ENCODE measurements at regions of chr19 and their contacts with region 1.

Region 1: DNA sequence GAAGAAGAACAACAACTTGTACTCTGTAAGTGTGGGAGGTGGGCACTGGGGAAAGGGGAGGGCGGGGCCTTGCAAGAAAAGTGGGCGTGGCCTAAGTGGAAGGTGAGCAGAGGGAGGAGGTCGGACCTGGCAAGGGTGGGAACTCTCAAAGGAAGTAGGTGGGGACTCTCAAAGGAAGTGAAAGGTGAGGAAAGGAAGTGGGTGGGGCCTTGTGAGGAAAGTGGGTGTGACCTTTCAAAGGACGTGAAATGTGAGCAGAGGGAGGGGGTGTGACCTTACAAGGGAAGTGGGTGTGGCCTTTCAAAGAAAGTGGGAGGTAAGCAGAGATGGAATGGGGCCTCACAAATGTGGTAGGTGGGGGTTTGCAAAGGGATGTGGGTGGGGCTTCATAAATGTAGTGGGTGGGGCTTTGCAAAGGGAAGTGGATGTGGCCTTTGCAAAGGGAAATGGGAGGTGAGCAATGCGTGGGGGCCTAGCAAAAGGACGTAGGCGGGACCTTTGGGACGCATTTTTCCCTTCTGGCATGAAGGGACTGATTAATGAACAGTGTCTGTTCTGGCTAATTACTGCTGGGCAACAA is 25.9 kb downstream of the ACSBG2 start:
- DNase-seq: peak; percentile 7
- H3K4me3 ChIP-seq: no peak overlapping the region
- H3K27ac ChIP-seq: no peak overlapping the region
- H3K4me1 ChIP-seq: no peaks in the 10 kb centered on the region
- H3K27me3 ChIP-seq: no peaks in the 10 kb centered on the region
- CTCF ChIP-seq: no peak
- POLR2A ChIP-seq: no peak

Region 2: GRCh38 chr19:6171566-6171965 is 10.2 kb after region 1 on chr19:
- CTCF ChIA-PET with region 1: no interaction called
- POLR2A ChIA-PET with region 1: no interaction called
- dilution Hi-C with region 1: no loop called
- intact Hi-C with region 1: no loop called
- DNase-seq: no peak
- H3K4me3 ChIP-seq: no peak overlapping the region
- H3K27ac ChIP-seq: no peak overlapping the region
- H3K4me1 ChIP-seq: no peaks in the 10 kb centered on the region
- H3K27me3 ChIP-seq: peaks cover 6 to 11% of the 10 kb centered on the region in 2 experiments
- CTCF ChIP-seq: no peak
- POLR2A ChIP-seq: no peak

Region 3: DNA sequence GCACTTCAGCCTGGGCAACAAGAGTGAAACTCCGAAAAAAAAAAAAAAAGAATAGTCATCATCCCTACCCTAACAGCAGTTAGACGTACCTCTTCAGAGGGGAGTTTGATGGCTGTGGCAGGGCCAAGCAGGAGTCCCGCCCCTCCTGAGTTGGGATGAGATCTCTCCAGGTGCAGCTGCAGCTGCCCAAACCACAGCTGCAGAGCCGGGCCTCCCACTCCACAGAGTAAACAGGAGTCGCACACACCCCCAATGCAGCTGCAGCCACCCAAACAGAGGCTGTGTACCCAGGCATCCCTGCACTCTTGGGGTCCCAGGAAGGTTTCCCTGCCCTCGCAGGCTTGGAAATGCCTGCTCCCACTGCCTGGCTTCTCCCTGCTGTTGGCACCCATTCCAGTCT is 135.8 kb after region 1 on chr19:
- CTCF ChIA-PET with region 1: interaction called, 6 read pairs
- POLR2A ChIA-PET with region 1: no interaction called
- dilution Hi-C with region 1: no loop called
- intact Hi-C with region 1: loop called (anchors 1 kb)
- DNase-seq: no peak
- H3K4me3 ChIP-seq: no peak overlapping the region
- H3K27ac ChIP-seq: no peak overlapping the region
- H3K4me1 ChIP-seq: no peaks in the 10 kb centered on the region
- H3K27me3 ChIP-seq: no peaks in the 10 kb centered on the region
- CTCF ChIP-seq: no peak
- POLR2A ChIP-seq: no peak

Region 4: GRCh38 chr19:6354098-6354674 is 192.8 kb after region 1 on chr19:
- CTCF ChIA-PET with region 1: interaction called, 23 read pairs
- POLR2A ChIA-PET with region 1: no interaction called
- dilution Hi-C with region 1: no loop called
- intact Hi-C with region 1: loop called (anchors 1 kb)
- DNase-seq: no peak
- H3K4me3 ChIP-seq: no peak overlapping the region
- H3K27ac ChIP-seq: no peak overlapping the region
- H3K4me1 ChIP-seq: no peaks in the 10 kb centered on the region
- H3K27me3 ChIP-seq: no peaks in the 10 kb centered on the region
- CTCF ChIP-seq: peak; percentile 15 to 51
- POLR2A ChIP-seq: no peak

Region 5: GRCh38 chr19:6632002-6632621 is 470.8 kb after region 1 on chr19:
- CTCF ChIA-PET with region 1: no interaction called
- POLR2A ChIA-PET with region 1: no interaction called
- dilution Hi-C with region 1: no loop called
- intact Hi-C with region 1: loop called (anchors 5 kb)
- DNase-seq: peak; percentile 85
- H3K4me3 ChIP-seq: no peak overlapping the region
- H3K27ac ChIP-seq: no peak overlapping the region
- H3K4me1 ChIP-seq: no peaks in the 10 kb centered on the region
- H3K27me3 ChIP-seq: no peaks in the 10 kb centered on the region
- CTCF ChIP-seq: peak; percentile 72 to 79
- POLR2A ChIP-seq: no peak